Esophagus squamous epithelium (tissue), 5 donors: ENCODE measurements at regions of chr16 and their contacts with region 1.

Region 1: GRCh38 chr16:1863681-1864460 is 8.1 kb downstream of the MEIOB start:
- DNase-seq: no peak
- H3K4me3 ChIP-seq: no peak overlapping the region
- H3K27ac ChIP-seq: no peak overlapping the region
- H3K4me1 ChIP-seq: peaks cover 0 to 11% (median 0%) of the 10 kb centered on the region in 3 donors
- H3K27me3 ChIP-seq: peaks cover 0 to 52% (median 0%) of the 10 kb centered on the region in 4 donors
- CTCF ChIP-seq: peak; percentile 20 to 60 (median 50)
- POLR2A ChIP-seq: no peak

Region 2: GRCh38 chr16:1258906-1259759 is 604.7 kb before region 1 on chr16:
- intact Hi-C with region 1: no loop called
- DNase-seq: no peak
- H3K4me3 ChIP-seq: peak overlapping the region in 3 of 4 donors; percentile 13 to 49 (median 29)
- H3K27ac ChIP-seq: no peak overlapping the region
- H3K4me1 ChIP-seq: peaks cover 5 to 18% (median 9%) of the 10 kb centered on the region in 3 donors
- H3K27me3 ChIP-seq: peaks cover 0 to 87% (median 21%) of the 10 kb centered on the region in 4 donors
- CTCF ChIP-seq: no peak
- POLR2A ChIP-seq: no peak

Region 3: GRCh38 chr16:1923299-1924034 is 59.6 kb after region 1 on chr16:
- intact Hi-C with region 1: loop called (anchors 5 kb)
- DNase-seq: no peak
- H3K4me3 ChIP-seq: no peak overlapping the region
- H3K27ac ChIP-seq: peak overlapping the region in 3 of 4 donors; percentile 2 to 47 (median 30)
- H3K4me1 ChIP-seq: peaks cover 13 to 43% (median 17%) of the 10 kb centered on the region in 3 donors
- H3K27me3 ChIP-seq: peaks cover 11 to 72% (median 14%) of the 10 kb centered on the region in 4 donors
- CTCF ChIP-seq: peak in 4 of 6 experiments; percentile 26 to 39 (median 30)
- POLR2A ChIP-seq: no peak